ENCODE measurements at regions of chr22 and their contacts with region 1.

Region 1: DNA sequence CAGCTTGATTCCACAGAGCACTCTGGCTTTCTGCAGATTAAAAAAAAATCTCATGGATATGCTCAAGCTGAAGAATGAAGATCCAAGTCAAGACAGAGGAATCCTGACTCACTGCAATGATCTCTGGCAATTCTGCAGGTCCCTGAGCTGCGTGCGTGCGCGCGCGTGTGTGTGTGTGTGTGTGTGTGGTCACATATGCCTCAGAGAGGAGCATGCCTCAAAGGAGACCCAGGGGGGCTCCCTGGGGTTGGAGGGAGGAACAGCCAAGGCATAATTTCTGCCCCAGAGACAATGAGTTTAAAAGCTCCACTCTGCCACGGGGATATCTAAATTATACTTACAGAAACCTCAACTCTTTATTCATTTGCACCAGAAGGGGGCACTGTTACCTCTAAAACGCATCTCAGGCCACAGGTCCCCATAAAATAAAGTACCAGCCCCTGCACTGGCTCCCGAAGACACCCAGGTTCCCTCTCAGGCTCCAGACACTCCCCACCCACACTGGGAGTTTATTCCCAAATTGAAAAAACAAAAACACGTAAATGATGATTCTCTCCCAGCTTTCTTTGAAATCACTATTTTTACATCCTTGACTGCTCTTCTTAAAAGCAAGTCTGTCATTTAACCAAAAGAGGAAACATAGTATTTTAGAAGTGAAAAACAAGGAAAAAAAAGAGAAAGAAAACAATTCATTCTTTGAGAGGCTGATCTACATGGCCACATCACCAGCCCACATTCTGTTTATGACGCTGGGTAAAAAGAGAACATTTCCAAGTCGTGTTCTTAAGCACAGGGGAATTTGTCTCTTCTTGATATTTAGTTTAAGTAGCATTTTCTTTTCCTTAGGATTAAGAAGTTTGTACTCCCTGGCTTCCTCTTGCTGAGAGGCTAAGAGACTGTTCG is 401.0 kb downstream of the LARGE1 start:
- DNase-seq: peak; percentile 51
- H3K4me3 ChIP-seq: no peak overlapping the region; the same call in 1 of the 2 replicates
- CTCF ChIP-seq: peak; percentile 36

Region 2: GRCh38 chr22:33357981-33358399 is 161.3 kb before region 1 on chr22:
- CTCF ChIA-PET with region 1: no interaction called
- POLR2A ChIA-PET with region 1: no interaction called
- DNase-seq: no peak
- H3K4me3 ChIP-seq: no peak overlapping the region
- CTCF ChIP-seq: no peak

Region 3: DNA sequence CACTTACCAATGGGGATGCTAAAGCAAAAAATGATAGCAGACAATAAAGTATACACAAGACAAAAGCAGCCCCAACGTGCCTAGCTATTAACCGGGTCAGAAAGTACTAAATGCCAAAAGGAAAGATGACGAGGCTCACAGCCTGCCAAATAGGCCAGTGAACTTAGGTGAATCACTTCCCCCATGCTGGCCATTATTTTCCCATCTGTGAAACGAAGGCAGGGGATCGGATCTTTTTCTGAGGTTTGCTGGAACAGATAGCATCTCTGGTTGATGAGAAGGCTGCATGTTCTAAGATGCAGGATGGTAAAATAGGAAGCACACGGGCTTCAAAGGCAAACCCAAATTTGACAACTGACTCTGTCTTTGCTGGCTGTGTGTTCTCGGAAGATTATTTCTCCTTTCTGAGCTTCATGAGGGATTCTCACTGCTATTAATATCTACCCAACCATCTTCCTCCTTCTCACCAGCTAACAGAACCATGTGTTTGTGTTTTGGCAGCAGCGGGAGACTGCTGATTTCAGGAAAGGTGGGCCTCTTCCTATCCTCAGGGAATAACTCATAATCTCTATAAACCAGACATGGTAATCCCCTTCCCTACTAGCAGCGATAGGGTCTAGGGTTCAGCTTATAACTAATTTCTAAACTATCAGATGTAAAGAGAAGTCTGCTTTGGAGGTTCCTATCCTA is 10.2 kb after region 1 on chr22:
- CTCF ChIA-PET with region 1: interaction called, 77 read pairs
- POLR2A ChIA-PET with region 1: no interaction called
- DNase-seq: no peak
- H3K4me3 ChIP-seq: no peak overlapping the region
- CTCF ChIP-seq: no peak

Region 4: DNA sequence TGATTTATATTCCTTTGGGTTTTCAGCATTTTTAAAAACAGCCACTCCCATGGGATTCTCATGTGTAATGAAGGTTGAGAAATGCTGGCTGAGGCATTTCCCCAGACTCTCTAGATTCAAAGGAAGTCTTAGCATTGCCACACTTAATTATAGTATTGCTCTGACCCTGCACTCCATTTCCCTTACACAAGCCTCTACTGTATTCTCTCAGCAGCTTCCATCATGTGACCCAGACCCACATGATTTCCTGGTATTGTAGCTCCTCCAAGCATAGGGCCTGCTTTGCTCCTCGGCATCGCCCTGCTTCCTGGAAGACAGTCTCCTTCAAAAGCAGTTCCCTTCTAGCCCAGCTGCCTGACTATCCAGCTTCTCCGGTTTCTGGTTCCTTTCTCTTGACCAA is 139.5 kb after region 1 on chr22:
- CTCF ChIA-PET with region 1: no interaction called
- POLR2A ChIA-PET with region 1: no interaction called
- DNase-seq: no peak
- H3K4me3 ChIP-seq: no peak overlapping the region
- CTCF ChIP-seq: no peak